OCI-LY7 (cell line): ENCODE measurements at regions of chr10 and their contacts with region 1.

Region 1: GRCh38 chr10:110724116-110724921 is 80.2 kb downstream of the RBM20 start:
- DNase-seq: peak; percentile 82
- H3K4me3 ChIP-seq: peak overlapping the region; percentile 61
- H3K27ac ChIP-seq: peak overlapping the region; percentile 92
- H3K4me1 ChIP-seq: peaks cover 57% of the 10 kb centered on the region
- CTCF ChIP-seq: no peak

Region 2: DNA sequence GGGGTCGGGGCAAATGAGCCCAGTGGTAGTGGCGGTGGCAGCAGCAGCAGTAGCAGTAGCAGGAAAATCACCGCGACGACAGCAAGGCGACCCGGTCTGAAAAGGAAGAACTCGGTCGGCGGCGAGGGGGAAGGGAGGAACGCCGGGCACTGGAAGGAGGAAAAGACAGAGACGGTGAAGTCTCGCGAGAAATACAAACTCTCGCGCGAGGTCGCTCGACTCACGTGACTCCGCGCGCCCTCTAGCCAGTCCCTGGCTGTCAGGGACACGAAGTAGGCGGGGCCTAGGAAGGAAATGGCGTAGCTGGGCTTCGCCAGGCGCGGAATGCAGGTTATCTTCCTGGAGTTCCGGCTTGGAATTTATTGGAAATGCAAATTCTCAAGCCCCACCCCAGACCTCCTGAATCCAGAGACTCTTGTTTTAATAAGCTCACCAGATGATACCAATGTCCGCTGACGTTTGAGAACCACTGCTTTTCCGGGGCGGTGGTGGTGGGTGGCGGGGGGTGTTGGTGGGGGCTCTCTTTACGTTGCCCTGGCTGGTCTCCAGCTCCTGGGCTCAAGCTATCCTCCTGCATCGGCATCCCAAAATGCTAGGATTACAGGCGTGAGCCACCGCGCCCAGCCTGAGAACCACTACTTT is 419.4 kb before region 1 on chr10 and contains the start of gene SMNDC1:
- CTCF ChIA-PET with region 1: no interaction called
- POLR2A ChIA-PET with region 1: no interaction called
- intact Hi-C with region 1: loop called (anchors 5 kb)
- DNase-seq: peak; percentile 99
- H3K4me3 ChIP-seq: peak within 1 kb of the TSS; percentile 99
- H3K27ac ChIP-seq: peak within 1 kb of the TSS; percentile 69
- H3K4me1 ChIP-seq: peaks cover 49% of the 10 kb centered on the region
- CTCF ChIP-seq: no peak
- total RNA-seq, gene SMNDC1: 8.1 and 10.0 TPM in 2 replicates

Region 3: GRCh38 chr10:110651044-110651958 is 73.0 kb before region 1 on chr10:
- CTCF ChIA-PET with region 1: interaction called, 3 read pairs
- POLR2A ChIA-PET with region 1: interaction called, 4 read pairs
- intact Hi-C with region 1: loop called (anchors 2 kb)
- DNase-seq: peak; percentile 71
- H3K4me3 ChIP-seq: peak overlapping the region; percentile 43
- H3K27ac ChIP-seq: peak overlapping the region; percentile 85
- H3K4me1 ChIP-seq: peaks cover 80% of the 10 kb centered on the region
- CTCF ChIP-seq: no peak; the same call in 1 of the 2 replicates

Region 4: DNA sequence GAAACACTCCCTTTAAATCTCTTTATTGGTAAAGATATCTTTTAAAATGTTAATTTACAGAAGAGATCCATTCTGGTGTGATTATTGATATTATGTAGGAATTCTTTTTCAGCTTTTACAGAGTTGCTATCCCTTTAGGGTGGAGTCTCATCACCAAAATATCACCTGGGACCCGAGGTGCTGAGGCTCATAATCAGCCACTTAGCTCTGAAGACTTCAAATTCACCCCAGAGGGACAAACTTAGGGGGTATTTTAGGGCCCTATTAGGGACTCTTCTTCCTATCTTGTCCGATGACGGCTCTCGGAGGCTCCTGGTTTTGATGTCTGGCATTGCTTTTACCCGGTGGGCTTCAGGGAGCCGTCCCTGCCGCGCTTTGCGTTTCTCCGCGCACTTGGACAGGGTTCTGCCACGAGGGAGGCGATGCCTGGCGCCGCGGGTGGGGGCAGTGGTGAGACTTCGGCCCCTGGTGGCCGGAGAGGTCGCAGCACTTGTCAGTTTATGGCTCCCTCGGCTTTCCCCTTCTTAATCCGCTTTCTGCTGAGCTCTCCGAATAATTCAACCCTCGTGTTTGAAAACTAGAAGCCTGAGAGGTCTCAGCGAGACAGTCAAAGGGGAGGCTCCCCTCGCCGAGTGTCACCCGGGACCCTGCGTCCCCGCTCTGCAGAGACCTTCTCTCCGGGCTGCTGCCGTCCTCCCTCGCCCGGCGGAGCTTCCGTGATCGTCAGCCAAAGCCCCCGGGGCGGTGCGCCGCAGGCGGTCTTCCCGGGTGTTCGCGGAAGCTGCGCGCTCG is 52.3 kb before region 1 on chr10:
- CTCF ChIA-PET with region 1: interaction called, 4 read pairs
- POLR2A ChIA-PET with region 1: interaction called, 6 read pairs
- intact Hi-C with region 1: loop called (anchors 1 kb)
- DNase-seq: peak; percentile 90
- H3K4me3 ChIP-seq: peak overlapping the region; percentile 71
- H3K27ac ChIP-seq: peak overlapping the region; percentile 73
- H3K4me1 ChIP-seq: peaks cover 19% of the 10 kb centered on the region
- CTCF ChIP-seq: peak; percentile 98